MCF 10A (cell line): ENCODE measurements at regions of chr9 and their contacts with region 1.

Region 1: DNA sequence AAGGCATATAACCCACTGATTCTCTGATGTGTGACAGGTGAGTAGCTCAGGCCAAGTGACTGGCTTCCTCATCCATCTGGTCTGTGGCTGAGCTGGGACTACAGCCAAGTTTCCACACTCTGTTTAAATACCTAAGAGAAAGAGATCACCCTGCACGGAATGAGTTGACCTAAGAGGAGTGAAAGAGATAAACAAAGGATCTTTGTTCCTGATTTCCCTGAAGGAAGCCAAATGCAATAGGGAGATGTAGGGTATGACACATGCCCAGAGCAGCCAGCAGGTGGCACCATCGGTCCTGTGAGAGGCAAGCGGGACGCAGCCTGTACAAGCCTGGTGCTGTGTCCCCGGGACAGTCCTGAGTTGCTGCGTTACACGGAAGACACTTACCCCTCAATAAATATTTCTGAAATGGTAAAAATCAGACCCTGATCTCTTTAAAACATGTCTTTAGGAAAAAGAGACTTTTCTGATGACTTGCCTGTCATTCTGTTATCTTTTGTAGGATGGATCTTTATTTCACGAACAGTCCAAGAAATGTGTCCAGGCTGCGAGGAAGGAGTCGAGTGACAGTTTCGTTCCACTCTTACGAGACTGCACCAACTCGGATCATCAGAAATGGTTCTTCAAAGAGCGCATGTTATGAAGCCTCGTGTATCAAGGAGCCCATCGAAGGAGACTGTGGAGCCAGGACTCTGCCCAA is 41.1 kb downstream of the GALNT12 start:
- DNase-seq: peak; percentile 80
- H3K4me3 Mint-ChIP-seq: no peak overlapping the region
- H3K27ac Mint-ChIP-seq: no peak overlapping the region
- H3K4me1 Mint-ChIP-seq: peaks cover 10% of the 10 kb centered on the region
- H3K27me3 Mint-ChIP-seq: peaks cover 32% of the 10 kb centered on the region
- CTCF ChIP-seq: peak; percentile 87

Region 2: DNA sequence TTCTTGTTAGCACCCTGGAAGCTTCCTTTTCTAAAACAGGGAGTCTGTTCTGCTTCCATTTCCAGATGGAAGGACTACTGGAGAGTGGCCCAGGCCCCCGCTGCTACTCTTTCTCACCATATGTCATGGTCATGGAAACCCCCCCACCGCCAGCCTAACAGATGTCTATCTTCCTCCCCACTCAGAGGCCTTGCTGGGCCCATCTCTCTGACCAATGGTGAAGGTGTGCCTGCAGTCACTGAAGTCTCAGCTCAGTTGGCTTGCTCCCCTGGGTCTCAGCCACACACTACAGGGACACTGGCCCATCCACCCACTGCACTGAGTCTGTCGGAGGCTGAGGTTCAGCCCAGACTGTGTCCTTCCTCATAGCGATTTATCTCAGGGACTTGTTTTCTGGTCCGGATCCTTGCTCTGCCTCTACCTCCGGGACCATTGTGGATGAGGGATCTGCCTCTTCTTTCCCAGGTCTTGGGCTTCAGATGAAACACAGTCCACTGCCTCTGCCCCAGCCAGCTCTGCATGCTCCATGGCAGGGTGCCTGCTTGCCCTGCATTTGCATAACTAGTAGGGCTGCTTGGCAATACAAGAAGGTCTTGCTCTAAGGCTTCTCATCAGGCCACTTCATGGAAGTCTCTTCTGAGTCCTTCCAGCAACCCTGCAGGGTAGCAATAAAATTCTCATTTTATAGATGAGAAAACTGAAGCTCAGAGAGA is 10.3 kb before region 1 on chr9:
- CTCF ChIA-PET with region 1: interaction called, 55 read pairs
- POLR2A ChIA-PET with region 1: no interaction called
- intact Hi-C with region 1: no loop called
- DNase-seq: no peak
- H3K4me3 Mint-ChIP-seq: no peak overlapping the region
- H3K27ac Mint-ChIP-seq: no peak overlapping the region
- H3K4me1 Mint-ChIP-seq: no peaks in the 10 kb centered on the region
- H3K27me3 Mint-ChIP-seq: peaks cover 62% of the 10 kb centered on the region
- CTCF ChIP-seq: no peak

Region 3: DNA sequence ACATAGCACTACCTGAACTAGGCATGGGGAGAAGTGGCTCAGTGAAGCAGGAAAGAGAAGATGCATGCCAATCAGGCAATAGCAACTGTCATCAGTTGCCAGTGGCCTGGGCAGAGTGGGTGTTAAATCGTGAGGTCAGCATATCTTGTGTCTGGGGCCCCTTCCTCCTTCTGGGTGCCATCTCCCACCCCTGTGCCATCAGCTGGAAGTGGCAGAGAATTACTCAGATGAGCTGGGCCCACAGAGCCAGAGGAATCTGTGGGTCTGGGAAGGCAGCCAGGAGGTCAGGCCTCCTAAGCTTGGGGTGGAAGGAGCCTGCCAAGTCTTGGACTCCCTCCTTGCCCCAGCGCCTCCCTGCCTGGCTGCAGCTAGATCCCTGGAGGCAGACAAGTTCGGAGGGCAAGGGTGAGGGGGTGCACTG is 25.4 kb after region 1 on chr9:
- CTCF ChIA-PET with region 1: interaction called, 13 read pairs
- POLR2A ChIA-PET with region 1: no interaction called
- intact Hi-C with region 1: no loop called
- DNase-seq: peak; percentile 74
- H3K4me3 Mint-ChIP-seq: no peak overlapping the region
- H3K27ac Mint-ChIP-seq: no peak overlapping the region
- H3K4me1 Mint-ChIP-seq: peaks cover 12% of the 10 kb centered on the region
- H3K27me3 Mint-ChIP-seq: peaks cover 38% of the 10 kb centered on the region
- CTCF ChIP-seq: no peak

Region 4: DNA sequence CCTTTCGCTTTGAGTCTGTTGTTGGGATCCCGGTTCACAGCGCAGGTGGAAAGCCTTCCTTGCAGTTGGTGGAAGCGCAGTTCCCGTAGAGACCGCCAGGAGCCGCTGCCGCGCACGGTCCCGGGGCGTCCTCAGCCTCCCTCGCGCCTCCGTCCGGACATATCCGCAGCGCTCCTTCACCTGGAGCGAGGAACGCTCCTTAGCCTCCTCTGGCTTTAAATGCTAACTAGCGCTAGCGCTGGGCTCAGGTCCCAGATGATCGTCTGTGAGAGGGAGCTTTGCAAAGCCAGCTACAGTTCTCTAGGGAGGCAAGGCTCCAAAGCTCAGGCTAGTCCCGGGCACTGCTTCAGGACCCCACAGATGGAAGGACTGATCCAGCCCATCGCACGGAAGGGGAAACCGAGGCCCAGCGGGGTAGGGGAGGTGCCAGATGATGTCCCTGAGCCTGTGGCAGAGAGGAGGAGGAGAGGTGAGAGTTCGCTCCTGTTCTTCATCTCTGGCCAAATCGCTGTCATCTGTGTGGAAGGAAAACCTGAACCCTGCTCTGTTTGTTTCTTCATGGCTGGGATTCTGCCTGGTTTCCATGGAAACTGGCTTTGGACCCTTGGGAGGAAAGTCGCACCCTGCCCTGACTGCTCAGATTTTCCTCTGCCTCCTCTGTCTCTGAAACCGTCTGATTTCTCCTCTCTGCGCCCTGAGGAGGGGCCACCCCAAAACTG is 126.6 kb after region 1 on chr9:
- CTCF ChIA-PET with region 1: interaction called, 44 read pairs
- POLR2A ChIA-PET with region 1: no interaction called
- intact Hi-C with region 1: loop called (anchors 1 kb)
- DNase-seq: peak; percentile 70
- H3K4me3 Mint-ChIP-seq: no peak overlapping the region
- H3K27ac Mint-ChIP-seq: no peak overlapping the region
- H3K4me1 Mint-ChIP-seq: no peaks in the 10 kb centered on the region
- H3K27me3 Mint-ChIP-seq: peaks cover 29% of the 10 kb centered on the region
- CTCF ChIP-seq: peak; percentile 93

Region 5: GRCh38 chr9:99140685-99141314 is 292.2 kb after region 1 on chr9:
- CTCF ChIA-PET with region 1: interaction called, 131 read pairs
- POLR2A ChIA-PET with region 1: interaction called, 3 read pairs
- intact Hi-C with region 1: loop called (anchors 1 kb)
- DNase-seq: peak; percentile 47
- H3K4me3 Mint-ChIP-seq: no peak overlapping the region
- H3K27ac Mint-ChIP-seq: no peak overlapping the region
- H3K4me1 Mint-ChIP-seq: peaks cover 5% of the 10 kb centered on the region
- H3K27me3 Mint-ChIP-seq: no peaks in the 10 kb centered on the region
- CTCF ChIP-seq: peak; percentile 87